ENCODE measurements at regions of chr15 and their contacts with region 1.

Region 1: GRCh38 chr15:99704444-99704838 is 28.8 kb downstream of the LYSMD4 start:
- DNase-seq: no peak
- ATAC-seq: peak; percentile 84
- H3K4me3 Mint-ChIP-seq: no peak overlapping the region
- H3K27ac Mint-ChIP-seq: 0 out of 2 replicates have a peak overlapping the region, but pooled peaks have one; percentile 0
- H3K4me1 Mint-ChIP-seq: peaks cover 22% of the 10 kb centered on the region
- H3K27me3 Mint-ChIP-seq: no peaks in the 10 kb centered on the region
- CTCF ChIP-seq: 0 out of 2 replicates have a peak, but pooled peaks have one; percentile 32

Region 2: DNA sequence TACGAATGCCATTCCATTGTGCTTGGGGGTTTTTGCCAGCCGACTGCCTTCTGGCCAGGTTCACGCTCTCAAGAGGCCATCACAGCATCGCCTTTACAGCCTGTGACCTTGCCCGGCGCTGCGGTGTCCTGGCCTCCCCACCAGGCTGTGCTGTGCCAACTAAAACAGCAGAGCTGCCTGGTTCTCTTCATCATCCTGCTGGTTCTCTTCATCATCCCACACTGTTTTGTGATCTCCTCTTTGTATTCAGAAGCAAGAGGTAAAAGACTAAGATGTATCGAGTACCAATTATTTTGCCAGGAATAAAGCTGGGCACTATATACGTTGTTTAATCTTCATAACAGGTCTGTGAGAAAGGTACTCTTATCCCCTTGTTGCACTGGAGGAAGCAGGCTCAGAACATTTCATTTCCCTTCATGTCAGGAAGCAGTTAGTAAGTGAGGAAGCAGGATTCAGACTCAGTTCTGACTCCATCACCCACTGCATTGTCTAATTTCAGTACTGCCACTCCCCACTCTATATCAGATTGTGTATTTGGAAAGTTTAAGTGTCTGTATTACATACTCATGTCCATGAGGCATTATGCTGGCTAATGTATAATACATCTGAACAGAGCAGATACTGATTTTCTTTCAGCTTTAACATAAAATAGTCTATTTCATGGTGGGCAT is 360.4 kb before region 1 on chr15:
- CTCF ChIA-PET with region 1: interaction called, 11 read pairs
- POLR2A ChIA-PET with region 1: interaction called, 3 read pairs
- DNase-seq: peak; percentile 66
- ATAC-seq: peak; percentile 100
- H3K4me3 Mint-ChIP-seq: no peak overlapping the region
- H3K27ac Mint-ChIP-seq: no peak overlapping the region
- H3K4me1 Mint-ChIP-seq: no peaks in the 10 kb centered on the region
- H3K27me3 Mint-ChIP-seq: no peaks in the 10 kb centered on the region
- CTCF ChIP-seq: peak; percentile 31; the same call in 1 of the 2 replicates

Region 3: GRCh38 chr15:99409097-99409473 is 295.4 kb before region 1 on chr15:
- CTCF ChIA-PET with region 1: interaction called, 44 read pairs
- POLR2A ChIA-PET with region 1: no interaction called
- DNase-seq: peak; percentile 65
- ATAC-seq: peak; percentile 93
- H3K4me3 Mint-ChIP-seq: no peak overlapping the region
- H3K27ac Mint-ChIP-seq: no peak overlapping the region
- H3K4me1 Mint-ChIP-seq: peaks cover 4% of the 10 kb centered on the region; the same call in 1 of the 2 replicates
- H3K27me3 Mint-ChIP-seq: no peaks in the 10 kb centered on the region
- CTCF ChIP-seq: 0 out of 2 replicates have a peak, but pooled peaks have one; percentile 13

Region 4: DNA sequence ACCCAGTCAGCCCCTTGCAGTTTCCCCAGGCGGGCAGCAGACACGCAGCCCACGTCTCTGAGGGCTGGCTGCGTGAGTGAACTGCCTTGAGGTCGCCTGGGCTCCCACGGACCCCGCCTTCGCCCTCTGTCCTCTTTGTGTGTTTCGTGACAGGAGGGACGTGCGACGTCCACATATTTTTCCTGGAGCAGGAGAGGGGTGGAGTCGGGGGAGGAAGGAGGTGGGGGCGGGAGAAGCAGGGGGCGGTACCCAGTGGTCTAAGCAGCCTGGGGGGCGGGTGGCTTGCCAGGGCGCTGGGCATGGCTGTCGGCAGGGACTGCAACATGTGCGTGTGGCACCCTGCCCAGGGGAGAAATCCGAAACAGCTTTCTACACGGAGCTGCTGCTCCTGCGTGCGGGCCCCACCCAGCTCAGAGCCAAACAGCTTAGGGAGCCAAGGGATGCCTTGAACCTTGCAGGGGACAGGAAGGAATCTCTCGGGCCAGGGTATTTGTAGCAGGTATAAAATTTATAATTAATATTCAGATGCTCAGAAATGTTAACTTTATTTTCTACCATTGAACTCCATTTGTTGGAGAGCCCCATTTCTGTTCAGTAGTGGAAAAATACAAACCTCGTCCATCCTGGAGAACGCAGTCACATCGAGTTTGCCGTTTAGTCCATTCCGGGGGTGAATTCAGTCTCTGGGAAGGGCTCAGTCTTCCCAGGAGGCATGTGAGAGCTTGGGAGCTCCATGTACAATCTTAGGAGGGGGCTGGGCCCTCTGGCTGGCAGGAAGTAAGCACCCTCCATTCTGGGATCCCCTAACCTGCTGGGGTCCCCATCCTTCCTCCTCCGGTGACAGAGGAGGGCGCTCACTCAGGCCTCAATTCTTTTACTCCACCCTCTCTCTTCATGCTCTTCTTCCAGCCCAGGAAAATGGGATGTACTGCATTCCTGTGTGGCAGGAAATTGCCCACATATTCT is 217.8 kb before region 1 on chr15:
- CTCF ChIA-PET with region 1: interaction called, 23 read pairs
- POLR2A ChIA-PET with region 1: interaction called, 3 read pairs
- DNase-seq: peak; percentile 42
- ATAC-seq: peak; percentile 52
- H3K4me3 Mint-ChIP-seq: peak overlapping the region; percentile 67
- H3K27ac Mint-ChIP-seq: no peak overlapping the region
- H3K4me1 Mint-ChIP-seq: peaks cover 25% of the 10 kb centered on the region
- H3K27me3 Mint-ChIP-seq: peaks cover 8% of the 10 kb centered on the region
- CTCF ChIP-seq: no peak

Region 5: GRCh38 chr15:99578809-99579208 is 125.6 kb before region 1 on chr15:
- CTCF ChIA-PET with region 1: interaction called, 13 read pairs
- POLR2A ChIA-PET with region 1: no interaction called
- DNase-seq: no peak
- ATAC-seq: peak; percentile 77
- H3K4me3 Mint-ChIP-seq: peak overlapping the region; percentile 46
- H3K27ac Mint-ChIP-seq: peak overlapping the region; percentile 96
- H3K4me1 Mint-ChIP-seq: peaks cover 84% of the 10 kb centered on the region
- H3K27me3 Mint-ChIP-seq: no peaks in the 10 kb centered on the region
- CTCF ChIP-seq: no peak

Region 6: GRCh38 chr15:99717161-99718009 is 12.9 kb after region 1 on chr15:
- CTCF ChIA-PET with region 1: interaction called, 32 read pairs
- POLR2A ChIA-PET with region 1: no interaction called
- DNase-seq: no peak
- ATAC-seq: peak; percentile 33; the same call in 1 of the 2 replicates
- H3K4me3 Mint-ChIP-seq: no peak overlapping the region
- H3K27ac Mint-ChIP-seq: no peak overlapping the region
- H3K4me1 Mint-ChIP-seq: peaks cover 16% of the 10 kb centered on the region
- H3K27me3 Mint-ChIP-seq: no peaks in the 10 kb centered on the region
- CTCF ChIP-seq: no peak

Measured in WTC11 (cell line).